Spleen (tissue), 13 donors: ENCODE measurements at regions of chrX and their contacts with region 1.

Region 1: DNA sequence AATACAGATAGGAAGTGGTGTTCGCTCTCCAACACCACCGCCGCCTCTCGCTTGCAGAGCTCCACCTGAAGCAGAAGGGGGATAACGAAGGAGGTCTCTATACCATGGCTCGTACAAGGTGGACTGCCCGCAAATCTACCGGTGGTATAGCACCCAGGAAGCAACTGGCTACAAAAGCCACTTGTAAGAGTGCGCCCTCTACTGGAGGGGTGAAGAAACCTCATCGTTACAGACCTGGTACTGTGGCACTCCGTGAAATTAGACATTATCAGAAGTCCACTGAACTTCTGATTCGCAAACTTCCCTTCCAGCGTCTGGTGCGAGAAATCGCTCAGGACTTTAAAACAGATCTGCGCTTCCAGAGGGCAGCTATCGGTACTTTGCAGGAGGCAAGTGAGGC is 5.2 kb upstream of the BMP15 start:
- DNase-seq: no peak
- H3K4me3 ChIP-seq: no peak overlapping the region
- H3K27ac ChIP-seq: no peak overlapping the region
- H3K4me1 ChIP-seq: no peaks in the 10 kb centered on the region
- H3K27me3 ChIP-seq: peaks cover 0 to 11% (median 0%) of the 10 kb centered on the region in 7 donors
- CTCF ChIP-seq: no peak
- POLR2A ChIP-seq: no peak

Region 2: GRCh38 chrX:50204364-50204899 is 700.9 kb before region 1 on chrX and contains the start of gene CCNB3:
- intact Hi-C with region 1: no loop called
- DNase-seq: peak; percentile 89
- H3K4me3 ChIP-seq: peak within 1 kb of the TSS in 4 of 8 donors; percentile 16 to 61 (median 26)
- H3K27ac ChIP-seq: peak within 1 kb of the TSS in 6 of 8 donors; percentile 36 to 78 (median 65)
- H3K4me1 ChIP-seq: peaks cover 5 to 9% (median 8%) of the 10 kb centered on the region in 6 donors
- H3K27me3 ChIP-seq: no peaks in the 10 kb centered on the region
- CTCF ChIP-seq: peak; percentile 50 to 85 (median 72)
- POLR2A ChIP-seq: no peak
- total RNA-seq, gene CCNB3: 0.20 to 2.1 (median 1.2) TPM

Region 3: DNA sequence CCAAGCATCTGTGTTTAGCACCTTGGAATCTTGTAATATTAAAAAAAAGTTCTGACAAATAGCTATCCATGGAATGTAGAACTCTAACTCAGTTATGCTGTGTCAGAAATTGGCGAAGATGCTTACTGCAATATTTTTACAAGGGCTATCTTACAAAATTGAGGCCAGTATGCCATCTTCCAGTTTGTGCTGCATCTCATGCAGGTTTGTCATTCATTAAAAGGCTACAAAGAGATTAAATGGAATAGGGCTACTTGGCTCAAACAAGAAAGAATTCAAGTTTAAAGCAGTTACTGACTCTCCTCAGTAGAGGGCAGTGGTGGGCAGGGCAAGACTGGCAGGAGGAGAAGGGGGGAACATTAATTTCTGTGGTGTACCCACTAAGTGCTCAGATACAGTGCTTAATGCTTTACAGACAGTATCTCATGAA is 157.8 kb before region 1 on chrX:
- intact Hi-C with region 1: loop called (anchors 10 kb)
- DNase-seq: no peak
- H3K4me3 ChIP-seq: no peak overlapping the region
- H3K27ac ChIP-seq: no peak overlapping the region
- H3K4me1 ChIP-seq: no peaks in the 10 kb centered on the region
- H3K27me3 ChIP-seq: peaks cover 0 to 7% (median 0%) of the 10 kb centered on the region in 7 donors
- CTCF ChIP-seq: peak in 6 of 11 experiments; percentile 26 to 45 (median 42)
- POLR2A ChIP-seq: no peak